Activated T-helper 1 cell treated with anti-CD3 and anti-CD28 coated beads, Interleukin-12 subunit alpha, Interleukin-12 subunit beta, Interleukin-2, Interleukin-4 antibody, amounts not matched to agents 30 ng/mL and 10 ng/mL and 1 ng/mL, durations not matched to agents 14 hours and 24 hours and 36 hours (primary cell): ENCODE measurements at regions of chr16 and their contacts with region 1.

Region 1: DNA sequence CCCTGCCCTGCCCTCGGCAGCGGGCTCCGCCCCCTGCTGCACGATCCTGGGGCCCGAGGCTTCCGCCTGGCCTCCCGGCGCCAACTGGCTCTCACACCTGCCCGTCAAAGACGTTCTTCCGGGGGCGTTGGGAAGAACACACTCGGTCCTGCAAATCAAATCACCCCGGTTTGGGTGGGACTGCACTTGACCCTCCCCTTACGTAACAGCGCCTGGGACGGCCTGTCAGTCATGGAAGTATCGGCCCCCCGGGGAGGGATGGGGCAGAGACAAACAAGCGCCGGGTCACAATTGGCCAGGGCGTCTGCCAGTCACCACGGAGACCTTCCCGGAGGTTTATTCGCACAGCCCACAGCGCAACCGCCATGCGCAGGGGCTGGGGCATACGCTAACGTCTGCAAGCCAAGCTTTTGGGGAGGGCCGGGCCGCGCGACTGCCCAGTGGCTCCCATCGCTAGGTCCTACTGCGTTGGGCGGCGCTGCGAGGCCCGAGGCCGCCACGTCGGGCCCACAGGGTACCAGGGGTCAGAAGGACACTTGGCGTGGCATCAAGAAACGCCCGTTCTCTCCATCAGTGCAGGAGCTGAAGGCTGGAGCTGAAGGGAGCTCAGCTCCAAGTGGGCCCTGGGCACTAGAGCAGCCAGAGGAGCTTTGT is 388 bp upstream of the AKTIP start:
- DNase-seq: peak; percentile 100
- H3K4me3 Mint-ChIP-seq: peak overlapping the region; percentile 87
- H3K27ac Mint-ChIP-seq: peak overlapping the region; percentile 93
- H3K4me1 Mint-ChIP-seq: peaks cover 70% of the 10 kb centered on the region
- H3K27me3 Mint-ChIP-seq: no peaks in the 10 kb centered on the region

Region 2: DNA sequence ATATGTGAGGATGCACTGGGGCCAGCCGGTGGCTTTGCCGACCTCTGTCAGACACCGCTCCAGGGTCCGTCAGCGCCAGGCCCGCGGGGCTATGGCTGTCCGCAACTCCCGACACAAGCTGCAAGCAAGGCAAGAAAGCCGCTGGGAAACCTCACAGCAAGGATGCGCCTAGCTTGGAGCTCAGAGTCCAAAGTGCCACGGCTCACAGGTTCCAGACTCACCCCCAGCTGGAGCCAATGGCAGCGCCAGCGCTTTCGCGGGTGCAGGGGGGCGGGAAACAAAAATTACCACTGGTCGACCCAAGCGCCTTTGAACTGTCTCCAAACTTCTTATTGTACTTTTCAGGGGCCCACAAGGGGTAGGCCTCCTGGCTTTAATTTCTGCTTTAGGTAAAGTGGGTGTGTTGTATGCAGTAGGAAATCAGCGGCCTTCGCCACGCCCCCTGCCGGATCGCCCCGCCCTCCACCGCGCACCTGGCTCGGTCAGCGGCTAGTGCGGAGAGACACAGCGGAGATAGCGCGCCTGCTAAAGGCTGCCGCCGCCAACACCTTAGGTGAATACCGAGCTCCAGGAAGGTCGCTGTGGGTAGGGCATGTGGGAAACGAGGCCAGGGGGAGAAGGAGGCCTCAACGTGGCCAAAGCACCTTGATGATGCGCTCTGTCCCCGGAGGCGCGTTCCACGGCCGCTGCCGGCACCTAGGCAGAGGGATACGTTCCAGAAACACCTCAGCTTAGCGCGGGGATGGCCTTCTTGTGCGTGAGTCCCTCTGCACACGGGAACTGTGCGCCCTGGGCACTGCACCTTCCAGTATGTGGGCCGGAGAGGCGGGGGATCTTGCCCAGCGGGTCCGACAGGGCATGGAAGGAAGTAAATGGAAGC is 130.2 kb before region 1 on chr16:
- intact Hi-C with region 1: loop called (anchors 5 kb)
- DNase-seq: peak; percentile 64
- H3K4me3 Mint-ChIP-seq: peak overlapping the region; percentile 82
- H3K27ac Mint-ChIP-seq: no peak overlapping the region
- H3K4me1 Mint-ChIP-seq: peaks cover 20% of the 10 kb centered on the region
- H3K27me3 Mint-ChIP-seq: peaks cover 28% of the 10 kb centered on the region

Region 3: DNA sequence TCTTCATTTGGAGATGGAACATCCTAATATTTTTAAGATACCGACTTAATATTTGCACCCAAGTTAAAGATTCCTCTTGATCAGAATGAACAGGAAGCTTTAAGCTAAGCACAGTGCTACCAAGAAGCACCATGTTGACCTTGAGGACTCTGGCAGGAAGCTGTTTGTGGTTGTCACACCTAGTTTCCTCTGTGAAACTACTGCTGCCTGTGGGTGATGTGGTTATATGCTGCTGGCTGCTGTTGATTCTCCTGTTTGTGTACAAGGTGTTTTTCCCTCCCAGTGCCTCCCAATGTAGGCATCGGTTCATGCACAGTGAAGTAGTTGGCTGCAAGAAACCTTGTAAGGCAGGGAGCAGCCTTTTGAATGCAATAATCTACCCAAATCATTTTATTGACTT is 45.7 kb before region 1 on chr16:
- intact Hi-C with region 1: loop called (anchors 1 kb)
- DNase-seq: peak; percentile 80
- H3K4me3 Mint-ChIP-seq: peak overlapping the region; percentile 73
- H3K27ac Mint-ChIP-seq: peak overlapping the region; percentile 94
- H3K4me1 Mint-ChIP-seq: peaks cover 88% of the 10 kb centered on the region
- H3K27me3 Mint-ChIP-seq: no peaks in the 10 kb centered on the region

Region 4: GRCh38 chr16:53518550-53519416 is 15.4 kb after region 1 on chr16:
- intact Hi-C with region 1: loop called (anchors 1 kb)
- DNase-seq: peak; percentile 83
- H3K4me3 Mint-ChIP-seq: peak overlapping the region; percentile 63
- H3K27ac Mint-ChIP-seq: peak overlapping the region; percentile 82
- H3K4me1 Mint-ChIP-seq: peaks cover 58% of the 10 kb centered on the region
- H3K27me3 Mint-ChIP-seq: peaks cover 2% of the 10 kb centered on the region